WTC11 (cell line): ENCODE measurements at regions of chr7 and their contacts with region 1.

Region 1: DNA sequence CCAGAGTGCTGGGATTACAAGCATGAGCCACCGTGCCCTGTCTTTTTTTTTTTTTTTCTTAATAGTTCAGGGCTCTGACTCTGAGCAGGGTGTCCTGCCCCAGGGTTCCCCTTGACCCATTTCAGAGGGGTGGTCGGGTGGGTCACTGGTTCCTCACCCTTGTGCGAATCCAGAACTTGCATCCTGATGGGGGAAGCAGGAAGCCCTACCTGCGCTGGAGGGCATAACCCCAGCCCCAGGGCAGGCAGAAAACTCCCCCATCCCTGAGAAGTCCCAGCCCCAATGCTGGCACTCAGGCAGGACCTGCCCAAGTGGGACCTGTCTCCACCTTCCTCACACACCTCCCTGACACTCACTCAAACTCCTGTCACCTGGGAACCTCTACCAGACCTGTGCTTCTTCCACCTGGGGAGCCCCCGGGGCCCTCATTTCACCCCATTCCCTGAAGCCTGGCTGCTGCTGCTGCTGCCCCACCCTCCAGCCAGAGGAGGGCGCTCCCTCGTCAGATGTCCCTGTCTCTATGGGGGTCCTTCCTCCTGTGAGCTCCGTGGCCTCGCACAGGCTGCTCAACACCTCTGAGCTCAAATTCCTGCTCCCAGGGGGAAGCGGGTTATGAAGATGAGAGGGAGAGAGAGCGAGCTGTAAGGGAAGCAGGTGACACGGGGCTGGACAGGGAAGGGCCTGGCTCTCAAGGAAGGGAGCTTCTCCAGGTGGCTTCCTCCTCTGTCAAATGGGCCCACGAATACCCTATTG is 15.1 kb upstream of the ZNF273 start:
- DNase-seq: peak; percentile 74
- ATAC-seq: peak; percentile 86
- H3K4me3 Mint-ChIP-seq: peak overlapping the region; percentile 76
- H3K27ac Mint-ChIP-seq: no peak overlapping the region
- H3K4me1 Mint-ChIP-seq: peaks cover 5% of the 10 kb centered on the region; the same call in 1 of the 2 replicates
- H3K27me3 Mint-ChIP-seq: peaks cover 72% of the 10 kb centered on the region
- CTCF ChIP-seq: peak; percentile 35; the same call in 1 of the 2 replicates

Region 2: DNA sequence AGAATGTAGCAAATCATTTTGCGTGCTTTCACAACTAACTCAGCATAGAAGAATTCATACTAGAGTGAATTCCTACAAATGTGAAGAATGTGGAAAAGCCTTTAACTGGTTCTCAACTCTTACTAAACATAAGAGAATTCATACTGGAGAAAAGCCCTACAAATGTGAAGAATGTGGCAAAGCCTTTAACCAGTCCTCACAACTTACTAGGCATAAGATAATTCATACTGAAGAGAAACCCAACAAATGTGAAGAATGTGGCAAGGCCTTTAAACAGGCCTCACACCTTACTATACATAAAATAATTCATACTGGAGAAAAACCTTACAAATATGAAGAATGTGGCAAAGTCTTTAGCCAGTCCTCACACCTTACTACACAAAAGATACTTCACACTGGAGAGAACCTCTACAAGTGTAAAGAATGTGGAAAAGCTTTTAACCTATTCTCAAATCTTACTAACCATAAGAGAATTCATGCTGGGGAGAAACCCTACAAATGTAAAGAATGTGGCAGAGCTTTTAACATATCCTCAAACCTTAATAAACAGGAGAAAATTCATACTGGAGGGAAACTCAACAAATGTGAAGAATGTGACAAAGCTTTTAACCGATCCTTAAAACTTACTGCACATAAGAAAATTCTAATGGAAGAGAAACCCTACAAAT is 181.2 kb before region 1 on chr7:
- CTCF ChIA-PET with region 1: no interaction called
- POLR2A ChIA-PET with region 1: no interaction called
- DNase-seq: no peak
- ATAC-seq: no peak
- H3K4me3 Mint-ChIP-seq: no peak overlapping the region
- H3K27ac Mint-ChIP-seq: no peak overlapping the region
- H3K4me1 Mint-ChIP-seq: no peaks in the 10 kb centered on the region
- H3K27me3 Mint-ChIP-seq: peaks cover 32% of the 10 kb centered on the region
- CTCF ChIP-seq: no peak

Region 3: GRCh38 chr7:64863021-64863420 is 24.9 kb before region 1 on chr7:
- CTCF ChIA-PET with region 1: no interaction called
- POLR2A ChIA-PET with region 1: no interaction called
- DNase-seq: no peak
- ATAC-seq: no peak
- H3K4me3 Mint-ChIP-seq: no peak overlapping the region
- H3K27ac Mint-ChIP-seq: no peak overlapping the region
- H3K4me1 Mint-ChIP-seq: no peaks in the 10 kb centered on the region
- H3K27me3 Mint-ChIP-seq: peaks cover 17% of the 10 kb centered on the region
- CTCF ChIP-seq: no peak

Region 4: GRCh38 chr7:64876792-64877713 is 10.9 kb before region 1 on chr7:
- CTCF ChIA-PET with region 1: interaction called, 14 read pairs
- POLR2A ChIA-PET with region 1: no interaction called
- DNase-seq: peak; percentile 80
- ATAC-seq: peak; percentile 95
- H3K4me3 Mint-ChIP-seq: peak overlapping the region; percentile 65
- H3K27ac Mint-ChIP-seq: no peak overlapping the region
- H3K4me1 Mint-ChIP-seq: peaks cover 2% of the 10 kb centered on the region; the same call in 1 of the 2 replicates
- H3K27me3 Mint-ChIP-seq: peaks cover 43% of the 10 kb centered on the region
- CTCF ChIP-seq: no peak

Region 5: GRCh38 chr7:64902806-64903721 is 15.1 kb after region 1 on chr7 and contains the start of gene ZNF273:
- CTCF ChIA-PET with region 1: interaction called, 17 read pairs
- POLR2A ChIA-PET with region 1: interaction called, 3 read pairs
- DNase-seq: peak; percentile 88
- ATAC-seq: peak; percentile 96
- H3K4me3 Mint-ChIP-seq: peak within 1 kb of the TSS; percentile 96
- H3K27ac Mint-ChIP-seq: peak within 1 kb of the TSS; percentile 98
- H3K4me1 Mint-ChIP-seq: peaks cover 39% of the 10 kb centered on the region
- H3K27me3 Mint-ChIP-seq: no peaks in the 10 kb centered on the region
- CTCF ChIP-seq: no peak
- total RNA-seq, gene ZNF273: 11.3 to 12.8 TPM (median 12.1 TPM) in 3 replicates

Region 6: DNA sequence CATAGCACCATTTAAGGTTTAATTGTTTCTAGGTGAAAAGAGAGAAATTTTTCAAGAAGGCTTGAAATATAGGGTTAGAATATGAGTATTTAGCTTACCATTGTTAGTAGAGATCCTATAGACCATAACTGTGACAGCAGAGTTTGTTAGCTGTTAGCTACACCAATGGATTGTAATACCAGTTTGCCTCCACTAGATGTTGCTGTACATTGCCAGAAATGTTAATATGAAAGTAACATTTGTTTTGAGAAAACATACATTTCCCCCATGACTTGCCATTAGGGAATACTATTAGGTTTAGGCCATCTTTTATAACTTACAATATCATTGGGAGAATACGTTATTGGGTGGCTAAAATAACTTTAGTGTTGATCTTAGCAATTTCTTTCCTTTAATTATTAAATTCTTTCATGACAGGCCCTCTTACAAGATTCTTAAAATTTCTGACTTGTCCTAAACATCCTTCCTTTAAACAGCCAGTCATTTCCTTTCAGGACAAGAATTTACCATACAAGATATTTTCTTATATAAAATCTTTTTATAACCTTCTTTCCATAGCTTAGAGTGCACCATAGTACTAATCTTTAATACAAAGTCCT is 63.4 kb after region 1 on chr7:
- CTCF ChIA-PET with region 1: interaction called, 20 read pairs
- POLR2A ChIA-PET with region 1: no interaction called
- DNase-seq: no peak
- ATAC-seq: no peak; the same call in 1 of the 2 replicates
- H3K4me3 Mint-ChIP-seq: no peak overlapping the region
- H3K27ac Mint-ChIP-seq: no peak overlapping the region
- H3K4me1 Mint-ChIP-seq: no peaks in the 10 kb centered on the region
- H3K27me3 Mint-ChIP-seq: peaks cover 19% of the 10 kb centered on the region
- CTCF ChIP-seq: peak; percentile 23; the same call in 1 of the 2 replicates

Region 7: GRCh38 chr7:65006094-65006992 is 118.4 kb after region 1 on chr7 and contains the start of gene ERV3-1:
- CTCF ChIA-PET with region 1: interaction called, 10 read pairs
- POLR2A ChIA-PET with region 1: interaction called, 3 read pairs
- DNase-seq: peak; percentile 86
- ATAC-seq: peak; percentile 99
- H3K4me3 Mint-ChIP-seq: peak within 1 kb of the TSS; percentile 93
- H3K27ac Mint-ChIP-seq: peak within 1 kb of the TSS; percentile 98
- H3K4me1 Mint-ChIP-seq: peaks cover 23% of the 10 kb centered on the region
- H3K27me3 Mint-ChIP-seq: no peaks in the 10 kb centered on the region; the same call in 1 of the 2 replicates
- CTCF ChIP-seq: no peak
- total RNA-seq, gene ERV3-1: 10.2 to 12.1 TPM (median 11.5 TPM) in 3 replicates

Region 8: DNA sequence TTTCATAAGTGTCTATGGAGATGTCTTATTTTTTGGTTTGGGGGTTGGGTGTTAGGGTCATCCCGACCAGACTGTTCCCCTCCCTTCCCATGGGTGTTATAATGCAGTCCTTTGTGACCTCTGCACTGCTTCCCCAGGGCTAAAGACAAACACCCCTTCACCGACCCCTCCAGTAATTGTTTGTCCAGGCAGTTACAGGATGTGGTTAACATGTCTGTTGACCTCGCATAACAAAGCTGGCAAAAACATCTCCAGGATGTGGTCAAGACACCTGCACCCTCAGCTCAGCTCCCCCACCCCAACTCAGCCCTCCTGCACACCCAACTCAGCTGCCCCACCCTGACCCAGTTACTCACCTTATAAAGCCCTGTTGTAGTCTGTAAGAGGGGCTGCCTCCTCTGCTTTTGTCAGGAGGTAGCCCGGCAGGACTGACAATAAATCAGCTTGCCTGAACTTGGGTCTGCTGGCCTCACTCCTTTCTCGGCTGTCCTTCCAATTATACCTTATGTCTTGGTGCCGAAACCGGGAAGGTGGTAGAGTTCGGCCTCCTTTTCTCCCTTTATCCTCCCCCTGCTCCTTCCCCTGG is 587.9 kb after region 1 on chr7:
- CTCF ChIA-PET with region 1: interaction called, 16 read pairs
- POLR2A ChIA-PET with region 1: no interaction called
- DNase-seq: no peak
- ATAC-seq: peak; percentile 36
- H3K4me3 Mint-ChIP-seq: no peak overlapping the region
- H3K27ac Mint-ChIP-seq: no peak overlapping the region
- H3K4me1 Mint-ChIP-seq: peaks cover 21% of the 10 kb centered on the region
- H3K27me3 Mint-ChIP-seq: peaks cover 12% of the 10 kb centered on the region
- CTCF ChIP-seq: no peak